GM12878 (cell line): ENCODE measurements at regions of chr17 and their contacts with region 1.

Region 1: GRCh38 chr17:5598457-5598856 is 14.1 kb upstream of the NLRP1 start:
- DNase-seq: no peak
- ATAC-seq: no peak
- H3K4me3 ChIP-seq: no peak overlapping the region
- H3K27ac ChIP-seq: no peak overlapping the region
- H3K4me1 ChIP-seq: no peaks in the 10 kb centered on the region
- H3K27me3 ChIP-seq: peaks cover 0 to 3% of the 10 kb centered on the region in 2 experiments; a peak in 2 of 4 replicates
- CTCF ChIP-seq: no peak
- EP300 ChIP-seq: no peak
- POLR2A ChIP-seq: no peak
- RAD21 ChIP-seq: no peak

Region 2: GRCh38 chr17:5747271-5747670 is 148.8 kb after region 1 on chr17:
- CTCF ChIA-PET with region 1: no interaction called
- POLR2A ChIA-PET with region 1: interaction called, 10 read pairs
- RAD21 ChIA-PET with region 1: no interaction called
- SMC1A ChIA-PET with region 1: no interaction called
- in situ Hi-C with region 1: no loop called
- intact Hi-C with region 1: no loop called
- DNase-seq: no peak
- ATAC-seq: no peak
- H3K4me3 ChIP-seq: no peak overlapping the region
- H3K27ac ChIP-seq: no peak overlapping the region
- H3K4me1 ChIP-seq: no peaks in the 10 kb centered on the region
- H3K27me3 ChIP-seq: no peaks in the 10 kb centered on the region
- CTCF ChIP-seq: peak in 1 of 3 experiments; percentile 8; a peak in 1 of 6 replicates
- EP300 ChIP-seq: no peak
- POLR2A ChIP-seq: no peak
- RAD21 ChIP-seq: no peak